Heart right ventricle (tissue), 16 donors: ENCODE measurements at regions of chr7 and their contacts with region 1.

Region 1: DNA sequence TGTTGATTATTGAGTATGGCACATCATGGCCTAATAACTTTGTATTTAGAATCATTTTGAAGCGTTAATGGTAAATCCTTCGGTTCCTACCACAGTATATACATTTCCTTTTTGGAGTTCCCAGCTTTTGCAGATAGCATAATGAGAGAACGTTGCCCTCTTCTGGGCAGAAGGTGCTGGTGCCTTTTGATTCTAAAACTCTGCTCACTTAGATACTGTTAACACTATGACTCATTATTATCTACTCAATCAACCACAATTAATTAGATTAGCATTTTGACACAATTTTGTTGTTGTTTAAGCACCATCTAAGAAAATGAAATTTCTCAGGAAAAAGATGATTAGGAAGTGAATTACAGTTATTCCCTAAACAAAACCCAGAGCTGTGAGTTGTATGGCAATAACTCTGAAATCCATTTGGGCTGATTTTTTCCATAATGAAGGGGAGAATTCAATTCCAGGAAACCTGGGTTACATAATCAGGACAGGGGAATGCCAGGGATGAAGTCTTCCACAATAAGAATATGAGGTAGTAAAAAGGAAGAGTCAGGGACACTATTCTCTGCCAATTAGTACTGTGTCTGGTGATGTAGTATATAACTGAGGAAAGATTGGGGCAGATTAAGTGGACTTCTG is 11.5 kb upstream of the DLD start:
- DNase-seq: no peak
- ATAC-seq: peak; percentile 62 to 79 (median 69)
- H3K4me3 ChIP-seq: no peak overlapping the region
- H3K27ac ChIP-seq: no peak overlapping the region
- H3K4me1 ChIP-seq: peaks cover 0 to 17% (median 0%) of the 10 kb centered on the region in 9 donors
- H3K27me3 ChIP-seq: peaks cover 0 to 4% (median 0%) of the 10 kb centered on the region in 7 donors
- CTCF ChIP-seq: peak; percentile 33 to 83 (median 72)

Region 2: DNA sequence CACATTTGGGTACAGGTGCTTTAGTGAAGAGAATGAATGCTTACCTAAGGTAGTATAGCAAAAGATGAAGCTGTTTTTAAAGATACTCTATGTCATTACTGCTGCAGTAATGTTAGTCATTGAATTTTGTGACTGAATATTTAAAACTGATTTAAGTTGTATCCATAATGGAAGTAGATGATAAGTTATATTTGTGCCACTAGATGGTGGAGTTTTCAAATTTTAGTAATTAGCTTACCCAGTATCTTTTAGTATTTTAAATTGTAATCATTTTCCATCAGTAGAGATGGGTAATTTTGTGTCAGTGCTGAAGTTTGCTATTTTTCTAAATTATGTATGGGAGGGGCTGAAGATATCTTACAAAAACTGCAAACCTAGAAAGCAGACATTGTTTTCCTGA is 685.5 kb before region 1 on chr7:
- intact Hi-C with region 1: loop called in 1 of 10 experiments (anchors 10 kb)
- DNase-seq: no peak
- ATAC-seq: no peak
- H3K4me3 ChIP-seq: no peak overlapping the region
- H3K27ac ChIP-seq: peak overlapping the region in 4 of 10 donors; percentile 11 to 42 (median 14)
- H3K4me1 ChIP-seq: peaks cover 0 to 16% (median 9%) of the 10 kb centered on the region in 9 donors
- H3K27me3 ChIP-seq: no peaks in the 10 kb centered on the region
- CTCF ChIP-seq: peak in 4 of 9 donors; percentile 15 to 20 (median 19)

Region 3: GRCh38 chr7:107381453-107381852 is 498.1 kb before region 1 on chr7:
- intact Hi-C with region 1: no loop called
- DNase-seq: no peak
- ATAC-seq: no peak
- H3K4me3 ChIP-seq: no peak overlapping the region
- H3K27ac ChIP-seq: no peak overlapping the region
- H3K4me1 ChIP-seq: peaks cover 0 to 8% (median under 1%) of the 10 kb centered on the region in 9 donors
- H3K27me3 ChIP-seq: no peaks in the 10 kb centered on the region
- CTCF ChIP-seq: no peak

Region 4: DNA sequence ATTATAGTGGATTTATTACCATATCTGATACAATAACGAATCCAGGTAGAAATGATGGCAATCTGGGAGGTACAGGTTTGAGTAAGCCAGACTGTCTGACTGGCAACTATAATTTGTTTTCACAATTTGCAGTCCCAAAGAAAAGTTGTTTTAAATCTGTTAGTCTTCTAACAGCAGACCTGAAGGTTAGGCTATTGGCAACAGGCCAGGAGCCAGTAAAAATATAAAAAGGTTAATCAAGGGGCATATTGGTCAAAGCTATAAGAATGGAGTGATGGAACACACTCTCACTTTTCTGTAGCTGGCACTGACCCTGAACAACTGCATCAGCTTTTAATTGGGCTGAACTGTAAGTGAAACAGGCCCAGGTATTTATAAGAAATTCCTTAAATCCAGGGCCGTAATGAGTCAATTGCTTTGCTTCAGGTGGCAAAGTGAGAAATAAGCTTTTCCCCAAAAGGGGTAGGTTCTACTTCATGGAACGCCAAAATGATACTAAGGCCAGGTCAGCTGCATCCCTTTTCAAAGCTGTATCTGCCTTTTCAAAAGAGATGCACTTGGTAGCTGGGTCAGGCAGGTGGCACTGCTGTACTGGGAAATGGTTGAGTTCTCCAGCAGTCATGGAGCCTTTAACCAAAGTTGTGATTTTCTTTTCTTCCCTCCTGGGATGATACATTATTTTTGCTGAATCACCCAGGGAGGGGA is 416.6 kb before region 1 on chr7:
- intact Hi-C with region 1: loop called in 5 of 10 experiments (anchors 5 to 10 kb)
- DNase-seq: peak; percentile 46 to 61
- ATAC-seq: peak; percentile 75 to 96 (median 90)
- H3K4me3 ChIP-seq: no peak overlapping the region
- H3K27ac ChIP-seq: peak overlapping the region in 7 of 10 donors; percentile 8 to 65 (median 51)
- H3K4me1 ChIP-seq: peaks cover 0 to 39% (median 5%) of the 10 kb centered on the region in 9 donors
- H3K27me3 ChIP-seq: no peaks in the 10 kb centered on the region
- CTCF ChIP-seq: peak; percentile 54 to 91 (median 73)

Region 5: DNA sequence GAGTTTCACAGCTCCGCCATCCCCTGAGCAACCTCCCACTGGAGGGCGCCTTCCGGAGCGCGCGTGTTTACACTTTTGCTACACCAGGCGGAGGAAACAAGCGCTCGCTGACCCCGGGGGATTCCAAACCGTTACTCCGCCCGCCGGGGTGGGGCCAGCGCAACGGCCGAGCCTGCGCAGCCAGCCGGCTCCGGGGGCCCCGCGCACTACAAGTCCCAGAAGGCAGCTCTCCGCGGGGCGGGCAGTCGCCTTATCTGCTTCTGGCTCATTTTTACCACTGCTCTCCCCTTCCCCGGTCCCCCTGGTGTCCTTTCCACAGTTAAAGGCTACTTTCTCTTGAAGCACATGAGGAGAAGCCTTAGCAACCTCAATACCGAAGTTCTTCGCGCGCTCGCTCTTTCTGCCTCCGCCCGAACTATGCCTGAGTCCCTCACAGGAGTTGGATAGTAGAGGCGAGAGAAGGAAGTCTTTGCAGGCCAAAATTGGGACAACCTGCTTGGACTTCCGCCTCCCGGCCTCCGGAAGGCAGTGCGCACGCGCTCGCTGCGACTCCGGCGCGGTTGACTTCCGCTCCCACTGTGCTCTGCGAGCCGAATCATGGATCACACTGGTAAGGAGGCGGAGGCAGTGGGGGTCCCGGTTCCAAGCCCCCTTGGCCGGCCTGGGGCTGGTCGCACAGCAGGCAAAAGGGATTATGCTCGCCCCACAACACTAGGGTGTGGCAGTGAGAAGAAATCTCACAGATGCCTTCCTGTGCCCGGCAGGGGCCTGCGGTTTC is 135.8 kb before region 1 on chr7 and contains the start of gene CBLL1:
- intact Hi-C with region 1: loop called in 9 of 10 experiments (anchors 2 to 5 kb)
- DNase-seq: peak; percentile 97
- ATAC-seq: peak; percentile 98 to 99 (median 99)
- H3K4me3 ChIP-seq: peak within 1 kb of the TSS; percentile 52 to 97 (median 88)
- H3K27ac ChIP-seq: peak within 1 kb of the TSS; percentile 92 to 98 (median 96)
- H3K4me1 ChIP-seq: peaks cover 11 to 49% (median 46%) of the 10 kb centered on the region in 9 donors
- H3K27me3 ChIP-seq: no peaks in the 10 kb centered on the region
- CTCF ChIP-seq: peak; percentile 42 to 93 (median 73)
- total RNA-seq, gene CBLL1: 18.3 to 31.3 (median 23.1) TPM

Region 6: GRCh38 chr7:108103558-108104298 is 224.2 kb after region 1 on chr7:
- intact Hi-C with region 1: no loop called
- DNase-seq: no peak
- ATAC-seq: peak in 5 of 8 donors; percentile 46 to 73 (median 65)
- H3K4me3 ChIP-seq: no peak overlapping the region
- H3K27ac ChIP-seq: peak overlapping the region in 4 of 10 donors; percentile 10 to 47 (median 29)
- H3K4me1 ChIP-seq: peaks cover 0 to 13% (median 0%) of the 10 kb centered on the region in 9 donors
- H3K27me3 ChIP-seq: no peaks in the 10 kb centered on the region
- CTCF ChIP-seq: no peak